ENCODE measurements at regions of chr1 and their contacts with region 1.

Region 1: GRCh38 chr1:112715264-112716053 is at the start of gene PPM1J:
- DNase-seq: peak; percentile 99
- ATAC-seq: peak; percentile 87
- total RNA-seq, gene PPM1J: 7.2 TPM

Region 2: GRCh38 chr1:112803906-112804762 is 88.7 kb after region 1 on chr1:
- intact Hi-C with region 1: loop called (anchors 5 kb)
- DNase-seq: peak; percentile 73
- ATAC-seq: peak; percentile 83